CD4-positive, alpha-beta T cell (primary cell): ENCODE measurements at regions of chr20 and their contacts with region 1.

Region 1: DNA sequence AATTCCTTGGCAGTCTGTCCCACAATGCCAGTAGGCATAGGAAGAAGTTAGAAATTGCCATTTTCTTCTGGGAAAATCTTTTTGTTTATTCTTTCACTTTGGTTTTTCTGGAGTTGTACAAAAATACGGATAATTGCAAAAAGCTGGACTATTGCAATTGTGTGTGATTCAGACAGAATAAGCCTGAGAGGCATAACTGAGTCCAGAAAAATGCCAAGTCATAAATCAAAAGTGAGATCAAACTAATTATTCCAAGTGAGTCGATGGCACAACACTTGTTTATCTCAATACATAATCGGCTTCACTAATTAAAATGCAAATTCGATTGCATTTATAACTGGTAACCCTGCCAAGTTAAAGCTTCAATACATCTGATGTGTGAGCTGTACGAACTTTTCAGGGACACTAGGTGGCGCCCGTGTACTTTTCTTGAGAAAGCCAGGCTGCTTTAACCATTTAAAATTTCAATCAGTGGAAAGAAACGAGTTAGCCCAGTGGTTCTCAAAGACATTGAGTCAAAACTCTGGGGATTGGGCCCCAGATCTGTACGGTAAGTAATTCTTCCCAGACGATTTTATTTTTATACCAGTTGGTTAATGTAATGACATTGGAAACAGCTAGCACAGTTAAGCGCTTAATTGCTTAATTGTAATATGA is 102.6 kb downstream of the LAMP5 start:
- DNase-seq: peak in 12 of 14 experiments; percentile 5 to 71 (median 18)
- ATAC-seq: no peak
- H3K4me3 ChIP-seq: no peak overlapping the region
- H3K4me3 Mint-ChIP-seq: no peak overlapping the region
- H3K27ac ChIP-seq: no peak overlapping the region
- H3K27ac Mint-ChIP-seq: no peak overlapping the region
- H3K4me1 ChIP-seq: no peaks in the 10 kb centered on the region
- H3K4me1 Mint-ChIP-seq: no peaks in the 10 kb centered on the region
- H3K27me3 ChIP-seq: peaks cover 0 to 4% of the 10 kb centered on the region in 2 experiments
- H3K27me3 Mint-ChIP-seq: peaks cover 37% of the 10 kb centered on the region
- CTCF ChIP-seq: peak; percentile 84

Region 2: GRCh38 chr20:9555781-9556180 is 61.2 kb before region 1 on chr20:
- CTCF ChIA-PET with region 1: no interaction called
- POLR2A ChIA-PET with region 1: no interaction called
- intact Hi-C with region 1: no loop called
- DNase-seq: no peak
- ATAC-seq: no peak
- H3K4me3 ChIP-seq: no peak overlapping the region
- H3K4me3 Mint-ChIP-seq: no peak overlapping the region
- H3K27ac ChIP-seq: no peak overlapping the region
- H3K27ac Mint-ChIP-seq: no peak overlapping the region
- H3K4me1 ChIP-seq: no peaks in the 10 kb centered on the region
- H3K4me1 Mint-ChIP-seq: no peaks in the 10 kb centered on the region
- H3K27me3 ChIP-seq: no peaks in the 10 kb centered on the region
- H3K27me3 Mint-ChIP-seq: no peaks in the 10 kb centered on the region
- CTCF ChIP-seq: no peak

Region 3: DNA sequence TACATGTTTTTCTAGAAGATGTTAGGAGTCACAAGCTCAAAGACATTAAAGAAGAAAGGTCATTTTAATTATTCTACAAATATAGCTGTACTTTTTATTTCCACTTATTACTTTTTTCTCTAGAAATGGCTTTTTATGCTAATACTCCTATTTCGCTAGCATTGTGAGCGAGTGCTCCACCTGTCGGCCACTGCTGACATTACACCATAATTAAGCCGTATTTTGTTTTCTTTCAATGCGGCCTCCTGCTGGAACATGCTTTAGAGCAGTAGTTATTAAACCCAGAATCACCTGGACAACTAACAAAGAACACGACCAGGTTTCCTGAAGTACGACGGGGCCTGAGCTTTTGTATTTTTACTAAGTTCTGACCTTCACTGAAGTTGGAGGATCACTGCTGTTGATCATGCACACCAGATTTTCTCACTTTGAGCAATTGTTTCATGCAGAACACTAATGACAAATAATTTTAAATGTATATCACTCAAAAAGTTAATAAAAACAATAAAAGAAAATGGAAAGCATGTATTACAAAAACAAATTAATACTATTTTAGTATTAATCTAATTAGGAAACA is 296.0 kb after region 1 on chr20:
- CTCF ChIA-PET with region 1: no interaction called
- POLR2A ChIA-PET with region 1: no interaction called
- intact Hi-C with region 1: loop called in 1 of 2 experiments (anchors 10 kb)
- DNase-seq: peak in 9 of 14 experiments; percentile 0 to 37 (median 12)
- ATAC-seq: no peak
- H3K4me3 ChIP-seq: no peak overlapping the region
- H3K4me3 Mint-ChIP-seq: no peak overlapping the region
- H3K27ac ChIP-seq: no peak overlapping the region
- H3K27ac Mint-ChIP-seq: no peak overlapping the region
- H3K4me1 ChIP-seq: no peaks in the 10 kb centered on the region
- H3K4me1 Mint-ChIP-seq: no peaks in the 10 kb centered on the region
- H3K27me3 ChIP-seq: no peaks in the 10 kb centered on the region
- H3K27me3 Mint-ChIP-seq: peaks cover 49% of the 10 kb centered on the region
- CTCF ChIP-seq: peak; percentile 78

Region 4: DNA sequence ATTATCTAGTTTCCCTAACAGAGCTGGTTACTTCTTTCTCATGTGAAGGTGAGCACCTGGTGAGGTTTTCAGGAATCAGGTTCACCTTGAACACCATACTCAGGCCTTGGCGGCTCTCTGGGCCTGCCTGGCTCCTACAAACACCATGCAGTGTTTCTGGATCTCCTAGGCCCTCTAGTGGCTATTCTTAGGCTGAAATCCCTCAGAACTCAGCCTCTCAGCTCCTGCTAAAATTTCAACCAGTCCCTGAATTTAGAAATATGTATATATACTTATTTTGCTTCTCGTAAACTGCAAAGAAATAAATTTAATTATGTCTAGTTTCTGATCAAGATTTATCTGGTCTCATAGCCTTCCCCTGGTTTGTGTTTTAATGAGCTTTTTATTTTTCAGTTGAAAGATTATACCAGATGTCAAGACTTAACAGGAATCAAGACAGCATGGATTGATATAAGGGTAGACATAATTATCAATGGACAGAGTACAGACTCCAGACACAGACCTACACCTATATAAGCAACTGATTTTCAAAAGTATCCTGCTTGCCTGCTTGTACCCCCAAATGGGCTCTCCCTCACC is 473.7 kb after region 1 on chr20:
- CTCF ChIA-PET with region 1: interaction called, 8 read pairs
- POLR2A ChIA-PET with region 1: no interaction called
- intact Hi-C with region 1: loop called in 1 of 2 experiments (anchors 5 kb)
- DNase-seq: peak in 7 of 14 experiments; percentile 1 to 62 (median 33)
- ATAC-seq: peak; percentile 51
- H3K4me3 ChIP-seq: no peak overlapping the region
- H3K4me3 Mint-ChIP-seq: no peak overlapping the region
- H3K27ac ChIP-seq: no peak overlapping the region
- H3K27ac Mint-ChIP-seq: no peak overlapping the region
- H3K4me1 ChIP-seq: no peaks in the 10 kb centered on the region
- H3K4me1 Mint-ChIP-seq: no peaks in the 10 kb centered on the region
- H3K27me3 ChIP-seq: no peaks in the 10 kb centered on the region
- H3K27me3 Mint-ChIP-seq: peaks cover 8% of the 10 kb centered on the region
- CTCF ChIP-seq: peak; percentile 74